HEK293 (cell line): ENCODE measurements at regions of chr1 and their contacts with region 1.

Region 1: DNA sequence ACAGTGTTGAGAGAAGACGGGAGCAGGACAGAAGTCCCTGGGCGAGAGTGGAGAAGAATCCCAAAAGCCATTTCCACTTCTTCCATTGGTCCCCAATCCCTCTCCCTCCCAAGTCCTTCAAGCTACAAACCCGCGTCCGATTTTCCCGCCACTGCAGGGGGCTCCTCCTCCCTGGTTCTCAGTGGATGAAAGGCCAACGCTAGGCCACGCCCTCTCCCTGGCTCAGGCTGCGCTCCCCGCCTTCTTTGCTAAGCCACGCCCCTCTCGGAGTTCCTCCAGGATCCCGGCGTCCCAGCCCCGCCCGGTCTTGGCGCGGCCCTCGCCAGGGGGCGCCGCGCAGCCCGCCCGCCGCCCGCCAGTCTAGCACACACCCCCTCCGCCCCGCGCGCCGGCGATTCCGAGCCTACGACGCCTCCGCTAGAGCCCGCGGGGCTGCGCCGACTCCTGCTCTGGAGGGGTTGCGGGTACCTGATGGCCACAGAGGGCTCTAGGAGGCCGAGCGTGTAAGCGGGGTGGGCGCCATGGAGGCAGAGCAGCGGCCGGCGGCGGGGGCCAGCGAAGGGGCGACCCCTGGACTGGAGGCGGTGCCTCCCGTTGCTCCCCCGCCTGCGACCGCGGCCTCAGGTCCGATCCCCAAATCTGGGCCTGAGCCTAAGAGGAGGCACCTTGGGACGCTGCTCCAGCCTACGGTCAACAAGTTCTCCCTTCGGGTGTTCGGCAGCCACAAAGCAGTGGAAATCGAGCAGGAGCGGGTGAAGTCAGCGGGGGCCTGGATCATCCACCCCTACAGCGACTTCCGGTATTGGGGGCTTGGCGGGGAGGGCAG is at the start of gene HCN3:
- H3K4me3 ChIP-seq: peak within 1 kb of the TSS; percentile 75
- H3K27ac ChIP-seq: peak within 1 kb of the TSS; percentile 58; the same call in 1 of the 2 replicates
- H3K4me1 ChIP-seq: no peaks in the 10 kb centered on the region
- CTCF ChIP-seq: peak; percentile 36; the same call in 1 of the 2 replicates

Region 2: GRCh38 chr1:154955718-154956543 is 321.4 kb before region 1 on chr1 and contains the start of gene PBXIP1:
- CTCF ChIA-PET with region 1: no interaction called
- POLR2A ChIA-PET with region 1: no interaction called
- H3K4me3 ChIP-seq: peak within 1 kb of the TSS; percentile 59
- H3K27ac ChIP-seq: no peak within 1 kb of the TSS
- H3K4me1 ChIP-seq: peaks cover 5% of the 10 kb centered on the region; the same call in 1 of the 2 replicates
- CTCF ChIP-seq: peak; percentile 20; the same call in 1 of the 2 replicates

Region 3: DNA sequence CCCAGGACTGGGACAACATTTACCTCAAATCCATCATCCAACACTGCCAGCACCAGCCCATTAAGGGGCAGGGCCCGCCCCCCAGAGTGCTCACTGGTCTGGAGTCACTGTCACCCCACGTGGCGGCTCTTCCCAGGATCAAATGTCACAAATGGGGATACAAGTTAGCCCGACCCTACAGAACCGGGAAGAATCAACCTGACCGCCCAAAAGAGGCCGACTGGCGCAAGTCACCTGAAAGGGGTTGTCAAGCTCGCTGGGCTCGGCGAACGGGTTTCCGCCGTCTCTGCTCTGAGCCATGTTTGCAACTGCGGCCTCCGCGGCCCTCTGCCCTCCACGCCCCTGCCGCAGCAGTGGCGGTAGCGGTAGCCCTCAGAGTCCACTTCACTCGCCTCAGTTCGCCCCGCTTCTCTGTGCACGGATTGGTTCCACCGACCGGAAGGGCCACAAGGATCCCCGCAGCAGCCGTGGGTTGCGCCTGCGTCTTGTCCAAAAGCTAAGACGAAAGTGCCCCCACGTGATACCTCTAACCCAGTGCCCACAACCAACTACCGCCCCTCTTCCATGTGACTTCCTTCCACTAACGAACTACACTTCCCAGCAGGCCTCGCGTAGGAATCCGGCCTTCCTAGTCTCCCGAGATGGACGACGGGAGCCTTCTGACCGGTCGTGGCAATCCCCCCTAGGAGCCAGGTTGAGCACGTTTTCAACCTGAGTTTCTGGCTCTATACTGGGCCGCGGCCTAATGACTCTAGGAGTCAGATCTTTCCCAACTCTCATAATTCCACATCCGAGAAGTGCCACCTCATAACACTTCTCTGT is 15.2 kb before region 1 on chr1 and contains the start of gene SCAMP3:
- CTCF ChIA-PET with region 1: interaction called, 4 read pairs
- POLR2A ChIA-PET with region 1: interaction called, 54 read pairs
- H3K4me3 ChIP-seq: peak within 1 kb of the TSS; percentile 91
- H3K27ac ChIP-seq: peak within 1 kb of the TSS; percentile 61
- H3K4me1 ChIP-seq: no peaks in the 10 kb centered on the region
- CTCF ChIP-seq: no peak

Region 4: GRCh38 chr1:155293086-155293749 is 15.9 kb after region 1 on chr1:
- CTCF ChIA-PET with region 1: interaction called, 6 read pairs
- POLR2A ChIA-PET with region 1: interaction called, 15 read pairs
- H3K4me3 ChIP-seq: no peak overlapping the region
- H3K27ac ChIP-seq: no peak overlapping the region
- H3K4me1 ChIP-seq: no peaks in the 10 kb centered on the region
- CTCF ChIP-seq: no peak

Region 5: DNA sequence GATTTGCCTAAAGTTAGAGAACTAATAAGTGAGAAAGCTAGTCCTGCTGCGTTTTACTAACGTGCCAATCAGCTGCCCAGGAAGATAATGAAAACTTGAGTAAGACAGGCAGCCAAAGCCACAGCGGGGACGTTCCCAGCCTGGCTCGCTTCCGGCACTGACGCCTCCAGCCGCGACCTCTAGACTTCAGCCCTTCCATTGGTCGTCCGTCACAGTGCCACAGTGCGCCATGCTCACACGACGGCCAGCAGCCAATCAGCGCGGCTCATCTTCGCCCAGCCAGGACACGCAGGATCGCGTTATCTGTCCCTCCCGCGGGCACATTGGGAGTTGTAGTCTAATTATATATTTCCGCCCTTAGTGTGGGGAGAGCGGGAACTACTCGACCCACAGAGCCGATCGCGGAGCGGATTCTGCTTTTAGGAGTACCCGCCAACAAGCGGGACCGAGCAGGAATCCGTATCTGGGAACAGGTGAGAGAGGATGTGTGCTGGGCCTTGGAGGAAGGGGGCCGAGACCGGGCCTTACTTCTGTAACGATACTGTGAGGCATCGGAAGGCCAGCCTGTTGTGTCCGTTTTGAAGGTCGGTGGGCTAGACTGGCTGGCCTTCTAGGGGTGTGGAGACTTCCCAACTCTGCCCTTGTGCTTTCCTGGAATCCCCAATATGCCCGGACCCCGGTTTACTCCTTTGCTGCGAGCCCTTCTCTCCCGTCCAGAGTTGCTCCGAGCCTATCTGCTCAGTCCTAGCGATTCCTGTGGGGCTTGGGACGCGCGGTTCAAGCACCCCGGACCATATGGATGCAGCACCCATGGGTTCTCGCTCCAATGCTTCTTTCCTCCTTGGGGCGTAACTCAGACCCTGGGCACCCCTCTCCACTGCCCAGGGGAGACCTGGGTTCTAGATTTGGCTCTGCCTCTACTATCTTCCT is 31.5 kb after region 1 on chr1 and contains the start of gene FDPS:
- CTCF ChIA-PET with region 1: interaction called, 4 read pairs
- POLR2A ChIA-PET with region 1: interaction called, 18 read pairs
- H3K4me3 ChIP-seq: peak within 1 kb of the TSS; percentile 67
- H3K27ac ChIP-seq: peak within 1 kb of the TSS; percentile 88
- H3K4me1 ChIP-seq: peaks cover 5% of the 10 kb centered on the region; the same call in 1 of the 2 replicates
- CTCF ChIP-seq: no peak

Region 6: DNA sequence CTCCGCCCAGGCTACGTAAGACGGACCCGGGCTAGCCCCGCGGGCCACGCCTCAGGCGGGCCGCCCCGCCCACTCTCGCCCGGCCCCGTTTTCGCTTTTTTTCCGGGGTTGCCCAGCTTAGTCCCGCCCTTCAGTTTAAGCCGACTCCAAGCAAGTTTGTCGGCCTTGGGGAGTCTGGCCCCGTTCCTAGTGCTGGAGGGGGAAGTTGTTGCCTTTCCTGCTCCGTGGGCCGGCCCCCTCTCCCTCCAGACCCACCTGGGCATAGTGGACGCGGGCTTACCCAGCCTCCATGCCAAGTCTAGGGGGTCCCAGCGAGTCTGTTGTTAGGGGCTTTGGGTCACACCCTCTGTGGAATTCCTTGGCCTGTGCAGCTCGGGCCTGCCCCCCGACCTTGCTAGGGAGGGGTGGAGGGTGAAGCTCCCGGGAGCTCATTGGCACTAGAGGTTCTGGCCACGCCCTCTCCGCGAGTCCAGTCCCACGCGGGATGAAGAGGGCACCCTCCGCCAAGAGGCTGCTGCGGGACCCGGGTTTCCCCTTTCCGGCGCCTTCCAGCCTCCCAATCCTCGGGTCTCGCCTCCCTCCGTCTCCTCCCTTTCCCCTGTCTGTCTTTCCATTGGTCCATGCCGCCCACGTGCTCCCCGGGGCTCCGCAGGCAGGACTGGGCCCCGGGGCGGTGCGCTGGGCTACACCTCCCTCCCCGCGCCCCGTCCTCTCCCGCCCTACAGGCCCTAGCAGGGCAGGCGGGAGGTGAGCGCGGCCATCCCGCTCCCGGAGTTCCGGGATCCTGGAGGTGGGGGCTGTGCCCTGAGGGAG is 46.7 kb after region 1 on chr1:
- CTCF ChIA-PET with region 1: interaction called, 8 read pairs
- POLR2A ChIA-PET with region 1: interaction called, 32 read pairs
- H3K4me3 ChIP-seq: peak overlapping the region; percentile 86
- H3K27ac ChIP-seq: peak overlapping the region; percentile 85
- H3K4me1 ChIP-seq: 0 out of 2 replicates have a peak, but pooled peaks cover 3% of the 10 kb centered on the region
- CTCF ChIP-seq: no peak